CD8-positive, alpha-beta memory T cell (primary cell): ENCODE measurements at regions of chr1 and their contacts with region 1.

Region 1: DNA sequence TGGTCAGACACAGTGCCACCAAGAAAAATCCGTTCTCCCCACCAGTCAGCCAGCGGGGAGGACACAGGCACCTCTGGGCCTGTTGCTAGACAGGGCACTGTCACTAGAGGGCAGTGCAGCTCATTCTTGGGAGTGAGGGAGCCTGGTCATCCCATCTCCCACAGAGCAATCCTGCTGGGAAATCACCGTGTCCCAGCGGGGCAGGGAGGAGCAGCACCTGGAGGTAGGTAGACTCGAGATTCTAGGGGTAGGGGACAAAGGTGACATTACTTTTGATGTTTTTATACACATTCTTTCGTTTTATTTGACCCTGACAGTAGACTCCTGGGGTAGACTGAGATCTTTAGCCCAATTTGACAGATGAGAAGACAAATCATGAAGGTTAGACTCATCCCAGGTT is 6.7 kb upstream of the CAMK1G start:
- DNase-seq: peak; percentile 31 to 63 (median 41)
- H3K4me3 ChIP-seq: no peak overlapping the region
- H3K4me3 Mint-ChIP-seq: no peak overlapping the region
- H3K27ac ChIP-seq: no peak overlapping the region
- H3K27ac Mint-ChIP-seq: peak overlapping the region in 2 of 8 donors; percentile 2 to 61
- H3K4me1 ChIP-seq: no peaks in the 10 kb centered on the region
- H3K4me1 Mint-ChIP-seq: peaks cover 0 to 1% (median 0%) of the 10 kb centered on the region in 3 donors
- H3K27me3 ChIP-seq: no peaks in the 10 kb centered on the region
- H3K27me3 Mint-ChIP-seq: peaks cover 12 to 25% of the 10 kb centered on the region in 2 donors

Region 2: DNA sequence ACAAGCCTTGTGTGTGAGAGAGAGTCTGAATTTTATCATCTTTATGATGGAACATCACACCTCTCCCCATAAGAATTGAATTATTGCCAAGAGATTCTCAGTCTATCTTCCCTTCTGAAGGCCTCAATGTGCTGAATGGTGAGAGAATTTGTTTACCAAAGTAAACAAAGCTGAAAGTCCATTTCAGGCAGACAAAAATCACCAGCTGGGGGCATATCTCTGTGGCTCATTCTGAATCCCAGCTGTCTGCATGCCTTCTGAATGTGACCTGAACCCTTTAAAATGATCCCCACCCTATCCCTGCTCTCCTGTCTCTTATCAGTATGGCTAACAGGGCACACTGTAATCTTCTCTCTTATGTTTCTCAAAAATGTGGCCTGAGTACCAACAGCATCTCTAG is 92.4 kb before region 1 on chr1:
- CTCF ChIA-PET with region 1: no interaction called
- POLR2A ChIA-PET with region 1: no interaction called
- DNase-seq: no peak
- H3K4me3 ChIP-seq: no peak overlapping the region
- H3K4me3 Mint-ChIP-seq: no peak overlapping the region
- H3K27ac ChIP-seq: no peak overlapping the region
- H3K27ac Mint-ChIP-seq: no peak overlapping the region
- H3K4me1 ChIP-seq: no peaks in the 10 kb centered on the region
- H3K4me1 Mint-ChIP-seq: peaks cover 6 to 15% (median 11%) of the 10 kb centered on the region in 3 donors
- H3K27me3 ChIP-seq: no peaks in the 10 kb centered on the region
- H3K27me3 Mint-ChIP-seq: peaks cover 4% of the 10 kb centered on the region in 2 donors

Region 3: DNA sequence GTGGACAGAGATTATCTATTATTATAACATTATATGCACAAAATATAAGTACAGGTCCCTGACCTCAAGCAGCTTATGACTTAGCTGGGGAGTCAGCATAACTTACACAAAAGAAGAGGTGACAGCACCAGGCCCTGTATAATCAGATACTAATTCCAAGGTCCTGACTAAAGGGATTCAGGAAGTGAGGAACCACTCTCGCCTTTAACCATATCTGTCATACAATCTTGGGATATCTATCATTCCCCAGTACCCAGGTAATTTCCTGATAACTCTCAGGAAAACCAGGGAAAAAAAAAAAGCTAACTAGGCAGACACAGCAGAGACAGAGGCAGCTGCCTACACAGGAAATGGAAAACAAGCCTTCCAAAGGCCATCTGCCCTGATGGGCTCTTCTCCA is 71.8 kb before region 1 on chr1:
- CTCF ChIA-PET with region 1: no interaction called
- POLR2A ChIA-PET with region 1: no interaction called
- DNase-seq: no peak
- H3K4me3 ChIP-seq: no peak overlapping the region
- H3K4me3 Mint-ChIP-seq: no peak overlapping the region
- H3K27ac ChIP-seq: no peak overlapping the region
- H3K27ac Mint-ChIP-seq: no peak overlapping the region
- H3K4me1 ChIP-seq: no peaks in the 10 kb centered on the region
- H3K4me1 Mint-ChIP-seq: no peaks in the 10 kb centered on the region
- H3K27me3 ChIP-seq: no peaks in the 10 kb centered on the region
- H3K27me3 Mint-ChIP-seq: peaks cover 11 to 44% of the 10 kb centered on the region in 2 donors

Region 4: DNA sequence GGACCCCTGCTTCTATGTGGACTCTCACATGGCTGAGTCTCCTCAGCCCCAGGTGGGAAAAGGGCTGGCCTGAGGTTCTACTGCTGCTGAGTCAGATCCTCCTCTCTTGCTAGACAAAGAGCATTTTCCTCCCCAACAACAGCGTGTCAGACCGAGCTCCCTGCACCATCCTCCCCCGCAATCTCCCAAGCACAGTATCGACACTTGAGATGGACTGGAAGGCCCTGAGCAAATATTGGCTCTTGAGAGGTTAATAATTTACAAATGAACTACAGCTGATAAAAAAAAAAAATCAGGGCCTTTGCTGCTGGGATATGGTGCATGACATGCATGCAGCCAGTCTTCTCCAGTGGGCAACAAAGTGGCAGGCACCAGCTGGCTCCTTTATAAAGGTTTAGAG is 48.8 kb before region 1 on chr1:
- CTCF ChIA-PET with region 1: no interaction called
- POLR2A ChIA-PET with region 1: no interaction called
- DNase-seq: no peak
- H3K4me3 ChIP-seq: no peak overlapping the region
- H3K4me3 Mint-ChIP-seq: no peak overlapping the region
- H3K27ac ChIP-seq: no peak overlapping the region
- H3K27ac Mint-ChIP-seq: no peak overlapping the region
- H3K4me1 ChIP-seq: no peaks in the 10 kb centered on the region
- H3K4me1 Mint-ChIP-seq: no peaks in the 10 kb centered on the region
- H3K27me3 ChIP-seq: no peaks in the 10 kb centered on the region
- H3K27me3 Mint-ChIP-seq: peaks cover 17 to 25% of the 10 kb centered on the region in 2 donors

Region 5: DNA sequence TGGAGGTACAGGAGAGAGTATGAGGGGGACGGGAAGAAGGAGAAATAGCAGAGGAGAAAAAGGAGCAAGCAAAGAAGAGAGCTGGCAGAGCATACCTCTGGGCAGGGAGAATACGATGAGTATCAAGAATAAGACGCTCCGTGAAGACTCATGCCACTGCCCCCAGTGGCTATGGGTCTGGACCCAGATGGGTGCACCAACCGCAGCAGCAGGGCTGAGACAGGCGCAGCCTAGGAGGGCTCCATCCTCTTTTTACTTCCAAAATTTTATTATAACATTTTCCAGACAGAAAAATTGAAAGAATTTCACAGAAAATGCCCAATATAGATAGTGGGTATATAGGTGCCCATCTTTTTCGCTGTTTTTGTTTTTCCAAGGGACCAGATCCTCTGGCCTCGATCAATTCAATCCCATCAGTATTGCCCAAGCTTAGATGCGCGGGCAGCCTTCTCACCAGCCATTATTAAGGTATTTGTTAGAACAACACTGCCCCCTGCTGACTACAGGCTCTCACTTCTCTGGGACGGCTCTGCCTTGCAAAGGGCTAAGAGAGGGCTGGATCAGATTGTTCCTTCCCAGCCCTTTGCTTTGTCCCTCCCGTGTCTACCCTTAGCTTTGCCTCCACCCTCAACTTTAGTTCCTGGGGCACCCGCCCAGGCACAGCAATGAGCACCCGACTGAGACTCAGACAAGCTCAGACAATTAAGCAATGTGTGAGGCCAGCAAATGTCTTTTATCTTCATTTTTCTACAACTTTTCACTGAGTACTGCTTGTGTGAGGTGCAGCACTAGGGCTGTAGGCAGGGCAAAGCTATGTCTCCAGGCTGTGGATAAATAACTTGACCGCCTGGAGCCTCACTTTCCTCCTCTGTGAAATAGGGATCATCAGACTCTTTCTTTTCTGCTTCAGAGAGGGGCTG is 10.8 kb before region 1 on chr1:
- CTCF ChIA-PET with region 1: interaction called, 22 read pairs
- POLR2A ChIA-PET with region 1: no interaction called
- DNase-seq: peak; percentile 47 to 65 (median 56)
- H3K4me3 ChIP-seq: no peak overlapping the region
- H3K4me3 Mint-ChIP-seq: no peak overlapping the region
- H3K27ac ChIP-seq: no peak overlapping the region
- H3K27ac Mint-ChIP-seq: no peak overlapping the region
- H3K4me1 ChIP-seq: peaks cover 8% of the 10 kb centered on the region
- H3K4me1 Mint-ChIP-seq: peaks cover 5 to 11% (median 6%) of the 10 kb centered on the region in 3 donors
- H3K27me3 ChIP-seq: peaks cover 6% of the 10 kb centered on the region
- H3K27me3 Mint-ChIP-seq: peaks cover 31 to 72% of the 10 kb centered on the region in 2 donors